ENCODE measurements at regions of chr1 and their contacts with region 1.

Region 1: GRCh38 chr1:73180397-73181189 is 898.3 kb upstream of the NEGR1 start:
- DNase-seq: no peak
- ATAC-seq: peak in 1 of 8 donors; percentile 38
- H3K4me3 ChIP-seq: no peak overlapping the region
- H3K27ac ChIP-seq: no peak overlapping the region
- H3K4me1 ChIP-seq: no peaks in the 10 kb centered on the region
- H3K27me3 ChIP-seq: no peaks in the 10 kb centered on the region
- CTCF ChIP-seq: no peak

Region 2: GRCh38 chr1:71422221-71422620 is 1758.4 kb before region 1 on chr1:
- intact Hi-C with region 1: loop called in 1 of 10 experiments (anchors 5 kb)
- DNase-seq: no peak
- ATAC-seq: no peak
- H3K4me3 ChIP-seq: no peak overlapping the region
- H3K27ac ChIP-seq: no peak overlapping the region
- H3K4me1 ChIP-seq: no peaks in the 10 kb centered on the region
- H3K27me3 ChIP-seq: no peaks in the 10 kb centered on the region
- CTCF ChIP-seq: no peak

Measured in heart right ventricle (tissue), 16 donors.